Activated T-helper 1 cell treated with anti-CD3 and anti-CD28 coated beads, Interleukin-12 subunit alpha, Interleukin-12 subunit beta, Interleukin-2, Interleukin-4 antibody, amounts not matched to agents 30 ng/mL and 10 ng/mL and 1 ng/mL, durations not matched to agents 14 hours and 24 hours and 36 hours (primary cell): ENCODE measurements at regions of chr3 and their contacts with region 1.

Region 1: GRCh38 chr3:33023172-33024136 is 72.0 kb downstream of the CCR4 start:
- DNase-seq: no peak
- H3K4me3 Mint-ChIP-seq: peak overlapping the region; percentile 28
- H3K27ac Mint-ChIP-seq: peak overlapping the region; percentile 94
- H3K4me1 Mint-ChIP-seq: peaks cover 56% of the 10 kb centered on the region
- H3K27me3 Mint-ChIP-seq: peaks cover 1% of the 10 kb centered on the region

Region 2: DNA sequence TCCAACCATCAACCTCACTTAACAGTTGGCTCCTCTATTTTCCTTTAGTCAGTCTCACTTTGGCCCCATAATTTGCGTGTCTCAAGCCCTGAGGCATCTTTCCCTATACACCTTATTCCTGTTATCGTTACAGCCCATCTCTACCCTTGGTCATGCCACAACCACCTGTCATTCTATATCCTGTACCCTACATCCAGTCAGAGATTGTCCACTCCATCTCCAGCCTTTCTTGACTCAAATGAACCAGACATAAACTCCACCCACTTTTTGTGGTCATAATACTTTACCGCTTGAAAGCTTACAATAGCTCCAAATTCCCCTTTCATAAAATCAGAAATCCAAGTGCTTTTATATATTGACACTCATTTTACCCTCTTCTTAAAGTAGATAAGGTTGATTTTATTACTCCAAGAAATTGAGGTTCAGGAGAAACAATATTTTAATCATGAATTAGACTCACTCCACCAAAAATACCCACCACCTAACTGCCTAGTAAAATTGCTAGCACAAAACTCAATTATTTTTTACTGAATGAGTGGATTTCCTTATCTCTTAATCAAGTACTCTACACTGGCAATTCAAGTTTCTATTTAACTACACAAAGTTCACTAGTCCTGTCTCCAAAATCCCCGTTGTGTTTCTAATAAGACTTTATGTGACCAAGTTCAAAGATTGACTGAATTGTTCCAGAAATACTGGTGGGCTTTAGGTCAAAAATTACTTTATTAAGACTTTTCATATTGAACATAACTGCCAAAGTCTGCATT is 62.9 kb before region 1 on chr3:
- intact Hi-C with region 1: loop called (anchors 1 kb)
- DNase-seq: no peak
- H3K4me3 Mint-ChIP-seq: peak overlapping the region; percentile 34
- H3K27ac Mint-ChIP-seq: peak overlapping the region; percentile 97
- H3K4me1 Mint-ChIP-seq: peaks cover 56% of the 10 kb centered on the region
- H3K27me3 Mint-ChIP-seq: no peaks in the 10 kb centered on the region

Region 3: GRCh38 chr3:33047842-33048834 is 24.7 kb after region 1 on chr3:
- intact Hi-C with region 1: loop called (anchors 1 kb)
- DNase-seq: peak; percentile 70
- H3K4me3 Mint-ChIP-seq: peak overlapping the region; percentile 80
- H3K27ac Mint-ChIP-seq: peak overlapping the region; percentile 99
- H3K4me1 Mint-ChIP-seq: peaks cover 81% of the 10 kb centered on the region
- H3K27me3 Mint-ChIP-seq: peaks cover 1% of the 10 kb centered on the region

Region 4: GRCh38 chr3:33096093-33096868 is 72.8 kb after region 1 on chr3:
- intact Hi-C with region 1: loop called (anchors 1 kb)
- DNase-seq: peak; percentile 39
- H3K4me3 Mint-ChIP-seq: peak overlapping the region; percentile 97
- H3K27ac Mint-ChIP-seq: peak overlapping the region; percentile 86
- H3K4me1 Mint-ChIP-seq: peaks cover 43% of the 10 kb centered on the region
- H3K27me3 Mint-ChIP-seq: peaks cover 2% of the 10 kb centered on the region

Region 5: GRCh38 chr3:34229871-34230270 is 1206.4 kb after region 1 on chr3:
- intact Hi-C with region 1: no loop called
- DNase-seq: no peak
- H3K4me3 Mint-ChIP-seq: no peak overlapping the region
- H3K27ac Mint-ChIP-seq: no peak overlapping the region
- H3K4me1 Mint-ChIP-seq: no peaks in the 10 kb centered on the region
- H3K27me3 Mint-ChIP-seq: no peaks in the 10 kb centered on the region